ENCODE measurements at regions of chr1 and their contacts with region 1.

Region 1: DNA sequence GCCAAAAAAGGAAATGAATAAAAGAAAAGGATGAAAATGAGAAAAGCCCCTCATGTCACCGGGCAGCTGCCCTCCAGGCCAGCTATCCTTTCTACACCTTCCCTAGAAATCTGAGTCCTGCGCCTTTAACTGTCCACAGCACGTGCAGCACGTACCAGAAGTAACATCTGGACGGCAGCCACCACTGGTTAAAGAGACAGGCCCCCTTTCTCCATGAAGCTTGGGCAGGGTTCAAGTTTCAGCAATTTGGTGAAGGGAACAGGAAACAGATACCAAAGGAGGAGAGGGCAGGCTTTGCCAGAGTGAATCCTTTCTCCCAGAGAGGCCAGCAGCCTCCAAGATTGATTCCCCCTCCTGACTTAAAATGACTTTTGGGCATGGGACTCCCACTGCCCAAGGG is 3.6 kb upstream of the KIAA2013 start:
- DNase-seq: no peak
- ATAC-seq: no peak
- H3K4me3 ChIP-seq: no peak overlapping the region
- H3K27ac ChIP-seq: peak overlapping the region; percentile 81
- H3K4me1 ChIP-seq: peaks cover 32% of the 10 kb centered on the region
- H3K27me3 ChIP-seq: no peaks in the 10 kb centered on the region
- CTCF ChIP-seq: no peak

Region 2: DNA sequence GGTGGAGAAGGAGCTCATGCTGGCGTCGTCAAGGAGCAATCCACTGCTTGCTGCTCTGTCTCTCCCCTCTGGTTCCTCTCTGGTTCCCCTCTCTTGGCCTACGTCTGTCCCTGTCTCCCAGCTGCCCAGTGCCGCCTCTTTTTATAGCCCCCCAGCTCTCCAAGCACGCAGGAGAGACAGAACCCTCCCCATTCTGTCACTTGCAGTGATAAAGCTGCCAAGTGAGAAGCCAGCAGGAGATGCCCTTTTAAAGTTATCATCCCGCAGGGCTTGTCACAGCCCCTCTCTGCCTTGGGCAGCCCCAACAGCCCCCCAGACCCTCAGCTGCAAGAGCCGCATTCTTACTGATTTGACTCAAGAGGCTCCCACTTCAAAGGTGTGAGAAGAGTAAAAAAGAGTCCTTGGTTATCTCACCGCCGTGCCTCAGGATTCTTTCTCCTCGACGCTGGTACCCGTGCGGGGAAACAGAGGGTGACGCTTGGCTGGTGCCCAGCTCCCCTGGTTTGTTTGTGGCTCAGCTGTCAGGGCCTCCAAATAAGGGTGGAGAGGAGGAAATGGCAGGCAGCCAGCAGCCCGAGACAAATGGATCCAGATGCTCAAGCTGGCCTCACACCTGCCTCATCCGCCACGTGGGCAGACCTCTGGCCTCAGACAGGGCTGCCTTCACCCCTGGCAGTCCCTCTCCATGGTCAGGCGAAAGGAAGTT is 82.0 kb before region 1 on chr1 and contains the start of gene NPPA:
- CTCF ChIA-PET with region 1: interaction called, 13 read pairs
- POLR2A ChIA-PET with region 1: no interaction called
- in situ Hi-C with region 1: no loop called
- intact Hi-C with region 1: no loop called
- DNase-seq: no peak
- ATAC-seq: no peak
- H3K4me3 ChIP-seq: no peak within 1 kb of the TSS
- H3K27ac ChIP-seq: no peak within 1 kb of the TSS
- H3K4me1 ChIP-seq: no peaks in the 10 kb centered on the region
- H3K27me3 ChIP-seq: no peaks in the 10 kb centered on the region
- CTCF ChIP-seq: no peak
- total RNA-seq, gene NPPA: not detected

Region 3: DNA sequence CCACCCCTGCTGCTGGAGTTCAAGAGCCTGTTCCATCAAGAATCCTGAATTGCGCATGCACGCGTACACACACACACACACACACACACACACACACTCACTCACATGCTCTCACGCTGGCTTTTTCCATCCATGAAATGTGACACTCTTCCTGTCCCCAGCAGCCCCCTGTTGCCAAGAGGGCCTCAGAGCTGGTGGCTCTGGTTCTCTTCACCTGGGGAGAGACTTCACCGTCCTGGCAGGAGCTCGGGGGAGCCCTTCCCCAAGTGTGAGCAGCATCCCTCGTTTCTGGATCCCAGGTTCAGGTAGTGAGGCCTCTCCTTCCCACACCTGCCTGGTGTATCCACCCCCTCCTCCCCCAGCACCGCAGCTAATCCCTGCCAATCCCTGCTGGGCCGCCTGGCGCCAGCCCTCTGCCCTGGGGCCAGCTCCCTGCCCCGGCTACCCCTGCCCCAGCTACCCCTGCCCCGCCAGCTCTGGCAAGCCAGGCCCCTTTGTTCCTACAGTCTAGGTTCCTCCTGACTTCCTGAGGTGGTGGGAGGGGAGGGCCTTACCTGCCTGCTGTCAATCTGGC is 14.6 kb after region 1 on chr1:
- CTCF ChIA-PET with region 1: interaction called, 4 read pairs
- POLR2A ChIA-PET with region 1: interaction called, 14 read pairs
- in situ Hi-C with region 1: no loop called
- intact Hi-C with region 1: no loop called
- DNase-seq: no peak
- ATAC-seq: no peak
- H3K4me3 ChIP-seq: no peak overlapping the region
- H3K27ac ChIP-seq: no peak overlapping the region
- H3K4me1 ChIP-seq: no peaks in the 10 kb centered on the region
- H3K27me3 ChIP-seq: no peaks in the 10 kb centered on the region
- CTCF ChIP-seq: no peak

Region 4: GRCh38 chr1:11985851-11986250 is 56.0 kb after region 1 on chr1:
- CTCF ChIA-PET with region 1: no interaction called
- POLR2A ChIA-PET with region 1: no interaction called
- in situ Hi-C with region 1: no loop called
- intact Hi-C with region 1: no loop called
- DNase-seq: no peak
- ATAC-seq: no peak
- H3K4me3 ChIP-seq: no peak overlapping the region
- H3K27ac ChIP-seq: no peak overlapping the region
- H3K4me1 ChIP-seq: peaks cover 20% of the 10 kb centered on the region
- H3K27me3 ChIP-seq: no peaks in the 10 kb centered on the region
- CTCF ChIP-seq: no peak

Region 5: DNA sequence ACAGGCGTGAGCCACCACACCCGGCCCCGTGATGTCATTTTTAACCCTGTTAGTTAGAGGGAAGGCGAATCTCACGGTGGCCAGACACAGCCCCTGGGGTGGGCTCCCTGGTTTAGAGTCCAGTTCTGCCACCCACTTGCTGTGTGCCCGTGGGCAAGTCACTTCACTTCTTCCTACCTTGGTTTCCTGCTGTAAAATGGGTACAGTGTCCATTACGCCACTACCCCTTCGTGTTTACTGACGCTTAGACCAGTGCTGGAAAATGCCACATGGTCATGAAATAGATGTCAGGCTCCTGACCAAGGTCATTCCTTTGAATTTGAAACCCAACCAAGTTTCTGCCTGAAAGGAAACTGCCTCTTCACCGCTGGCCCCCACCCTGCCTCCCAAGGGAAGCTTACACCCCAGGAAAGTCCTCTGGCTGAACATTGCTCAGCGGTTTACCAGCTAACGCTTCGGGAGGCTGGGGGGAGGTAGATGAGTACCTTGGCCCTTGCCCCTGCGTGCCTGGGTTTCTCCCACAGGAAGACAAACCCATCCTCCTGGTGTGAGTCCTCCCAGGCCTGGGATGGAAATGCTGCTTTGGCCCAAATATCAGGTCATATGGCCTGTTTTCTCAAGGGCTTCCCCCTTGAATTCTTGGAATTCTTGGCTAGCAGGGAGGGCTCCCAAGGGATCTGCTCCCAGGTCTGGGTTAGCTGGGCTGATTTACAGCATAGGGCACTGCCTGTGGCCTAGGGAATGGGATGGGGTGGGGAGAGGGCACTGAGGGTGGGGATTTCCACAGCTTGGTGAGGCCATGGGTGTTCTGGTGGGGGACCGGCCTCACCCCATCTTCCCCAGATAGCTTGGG is 706.5 kb after region 1 on chr1:
- CTCF ChIA-PET with region 1: no interaction called
- POLR2A ChIA-PET with region 1: no interaction called
- in situ Hi-C with region 1: no loop called
- intact Hi-C with region 1: no loop called
- DNase-seq: no peak
- ATAC-seq: no peak
- H3K4me3 ChIP-seq: no peak overlapping the region
- H3K27ac ChIP-seq: peak overlapping the region; percentile 31; the same call in 1 of the 2 replicates
- H3K4me1 ChIP-seq: no peaks in the 10 kb centered on the region
- H3K27me3 ChIP-seq: no peaks in the 10 kb centered on the region
- CTCF ChIP-seq: no peak

Measured in Panc1 (cell line).